Natural killer cell (primary cell): ENCODE measurements at regions of chr17 and their contacts with region 1.

Region 1: DNA sequence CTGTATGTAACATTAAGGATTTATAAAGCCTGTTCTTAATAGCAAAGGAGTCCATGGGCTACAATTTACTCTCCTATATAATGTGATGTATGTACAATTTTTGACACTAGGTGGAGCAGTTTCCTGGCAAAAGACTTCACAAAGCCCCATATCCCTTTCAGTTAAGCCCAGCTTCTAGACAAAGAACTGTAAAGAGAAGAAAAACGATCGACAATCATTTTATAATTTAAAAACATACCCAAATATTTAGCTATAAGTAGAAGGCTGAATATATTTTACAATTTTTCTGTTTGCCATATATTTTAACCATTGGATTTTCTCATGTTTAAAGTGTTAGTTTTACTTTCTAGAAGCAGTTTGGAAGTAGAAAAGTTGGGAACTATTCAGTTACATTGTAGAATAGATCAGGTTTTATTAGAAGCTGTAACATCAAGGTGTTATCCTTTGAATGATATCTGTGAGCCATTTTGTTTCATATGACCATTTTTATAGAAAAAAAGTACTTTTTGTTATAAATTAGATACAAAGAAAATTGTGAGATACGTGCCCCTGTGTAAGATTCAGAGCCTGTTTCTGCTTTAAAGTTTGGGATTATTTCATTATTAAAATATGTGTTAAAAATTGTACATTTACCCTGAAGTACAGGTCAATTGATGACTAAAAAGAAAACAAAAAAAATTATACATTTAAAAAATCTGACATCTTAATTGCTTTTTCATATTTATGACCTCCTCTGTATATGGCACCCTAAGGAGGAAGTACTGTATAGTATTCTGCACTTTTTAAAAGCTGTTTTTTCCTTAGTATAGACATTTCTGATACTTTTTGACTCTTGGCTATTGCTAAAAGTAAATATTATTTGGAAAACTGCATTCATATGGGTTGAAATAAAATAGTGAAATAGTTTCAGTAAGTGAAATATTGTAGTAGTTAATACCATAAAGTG is 46.3 kb downstream of the VMP1 start:
- DNase-seq: peak in 1 of 2 donors; percentile 90
- ATAC-seq: peak; percentile 91 to 99 (median 97)
- H3K4me3 ChIP-seq: no peak overlapping the region
- H3K4me3 Mint-ChIP-seq: peak overlapping the region; percentile 21
- H3K27ac ChIP-seq: no peak overlapping the region
- H3K27ac Mint-ChIP-seq: peak overlapping the region; percentile 61 to 68
- H3K4me1 ChIP-seq: no peaks in the 10 kb centered on the region
- H3K4me1 Mint-ChIP-seq: peaks cover 0 to 9% of the 10 kb centered on the region in 2 donors
- H3K27me3 ChIP-seq: no peaks in the 10 kb centered on the region
- H3K27me3 Mint-ChIP-seq: no peaks in the 10 kb centered on the region
- CTCF ChIP-seq: peak; percentile 75

Region 2: GRCh38 chr17:59859444-59860025 is 105.7 kb after region 1 on chr17:
- intact Hi-C with region 1: loop called (anchors 1 kb)
- DNase-seq: peak in 1 of 2 donors; percentile 72
- ATAC-seq: peak; percentile 52 to 67 (median 65)
- H3K4me3 ChIP-seq: no peak overlapping the region
- H3K4me3 Mint-ChIP-seq: no peak overlapping the region
- H3K27ac ChIP-seq: no peak overlapping the region
- H3K27ac Mint-ChIP-seq: no peak overlapping the region
- H3K4me1 ChIP-seq: no peaks in the 10 kb centered on the region
- H3K4me1 Mint-ChIP-seq: no peaks in the 10 kb centered on the region
- H3K27me3 ChIP-seq: no peaks in the 10 kb centered on the region
- H3K27me3 Mint-ChIP-seq: no peaks in the 10 kb centered on the region
- CTCF ChIP-seq: peak; percentile 69

Region 3: DNA sequence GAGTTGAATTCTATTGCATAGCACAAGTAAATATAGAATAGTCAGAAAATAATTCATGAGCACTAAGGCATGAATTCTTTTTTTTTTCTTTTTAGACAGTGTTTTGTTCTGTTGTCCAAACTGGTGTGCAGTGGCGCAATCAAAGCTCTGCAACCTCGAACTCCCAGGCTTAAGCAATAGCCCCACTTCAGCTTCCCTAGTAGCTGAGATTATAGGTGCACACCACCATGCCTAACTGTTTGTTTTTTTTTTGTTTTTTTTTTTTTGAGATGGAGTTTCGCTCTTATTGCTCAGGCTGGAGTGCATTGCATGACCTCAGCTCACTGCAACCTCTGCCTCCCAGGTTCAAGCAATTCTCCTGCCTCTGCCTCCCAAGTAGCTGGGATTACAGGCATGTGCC is 122.3 kb after region 1 on chr17:
- intact Hi-C with region 1: no loop called
- DNase-seq: no peak
- ATAC-seq: no peak
- H3K4me3 ChIP-seq: no peak overlapping the region
- H3K4me3 Mint-ChIP-seq: no peak overlapping the region
- H3K27ac ChIP-seq: no peak overlapping the region
- H3K27ac Mint-ChIP-seq: no peak overlapping the region
- H3K4me1 ChIP-seq: no peaks in the 10 kb centered on the region
- H3K4me1 Mint-ChIP-seq: no peaks in the 10 kb centered on the region
- H3K27me3 ChIP-seq: no peaks in the 10 kb centered on the region
- H3K27me3 Mint-ChIP-seq: no peaks in the 10 kb centered on the region
- CTCF ChIP-seq: no peak

Region 4: GRCh38 chr17:60036796-60037612 is 283.2 kb after region 1 on chr17:
- intact Hi-C with region 1: loop called (anchors 5 kb)
- DNase-seq: peak; percentile 56 to 85
- ATAC-seq: peak; percentile 86 to 95 (median 91)
- H3K4me3 ChIP-seq: no peak overlapping the region
- H3K4me3 Mint-ChIP-seq: no peak overlapping the region
- H3K27ac ChIP-seq: no peak overlapping the region
- H3K27ac Mint-ChIP-seq: no peak overlapping the region
- H3K4me1 ChIP-seq: peaks cover 4% of the 10 kb centered on the region
- H3K4me1 Mint-ChIP-seq: peaks cover 5 to 6% of the 10 kb centered on the region in 2 donors
- H3K27me3 ChIP-seq: no peaks in the 10 kb centered on the region
- H3K27me3 Mint-ChIP-seq: peaks cover 6 to 14% of the 10 kb centered on the region in 2 donors
- CTCF ChIP-seq: peak; percentile 86